ENCODE measurements at regions of chr11 and their contacts with region 1.

Region 1: GRCh38 chr11:57249384-57250319 is 12.6 kb upstream of the APLNR start:
- DNase-seq: peak; percentile 70
- H3K4me3 Mint-ChIP-seq: no peak overlapping the region
- H3K27ac Mint-ChIP-seq: no peak overlapping the region
- H3K4me1 Mint-ChIP-seq: peaks cover 6% of the 10 kb centered on the region
- H3K27me3 Mint-ChIP-seq: peaks cover 34% of the 10 kb centered on the region

Region 2: DNA sequence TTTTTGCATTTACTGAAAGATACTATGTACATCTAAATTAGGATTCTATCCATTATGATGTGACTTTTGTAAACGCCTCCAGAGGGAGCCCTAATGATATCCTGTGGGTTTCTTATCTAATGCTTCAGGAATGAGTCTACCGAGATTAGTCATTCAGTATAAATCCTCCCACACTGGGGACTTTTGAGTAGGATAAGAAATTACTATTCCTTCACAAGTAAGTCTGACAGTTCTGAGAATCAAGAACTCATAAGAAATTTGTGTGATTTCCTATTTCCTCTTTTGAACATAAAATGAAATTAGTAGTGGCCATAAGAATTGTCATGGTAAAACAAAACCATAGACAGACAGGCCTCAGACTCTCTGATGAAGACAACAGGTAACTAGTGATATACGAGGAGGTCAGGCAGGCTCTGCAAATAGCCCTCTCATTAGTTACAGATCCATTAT is 625.0 kb before region 1 on chr11:
- CTCF ChIA-PET with region 1: no interaction called
- intact Hi-C with region 1: loop called (anchors 2 kb)
- DNase-seq: peak; percentile 11
- H3K4me3 Mint-ChIP-seq: no peak overlapping the region
- H3K27ac Mint-ChIP-seq: no peak overlapping the region
- H3K4me1 Mint-ChIP-seq: no peaks in the 10 kb centered on the region
- H3K27me3 Mint-ChIP-seq: no peaks in the 10 kb centered on the region

Region 3: GRCh38 chr11:57001674-57002401 is 247.8 kb before region 1 on chr11:
- CTCF ChIA-PET with region 1: interaction called, 3 read pairs
- intact Hi-C with region 1: loop called (anchors 2 kb)
- DNase-seq: no peak
- H3K4me3 Mint-ChIP-seq: no peak overlapping the region
- H3K27ac Mint-ChIP-seq: no peak overlapping the region
- H3K4me1 Mint-ChIP-seq: no peaks in the 10 kb centered on the region
- H3K27me3 Mint-ChIP-seq: no peaks in the 10 kb centered on the region

Region 4: DNA sequence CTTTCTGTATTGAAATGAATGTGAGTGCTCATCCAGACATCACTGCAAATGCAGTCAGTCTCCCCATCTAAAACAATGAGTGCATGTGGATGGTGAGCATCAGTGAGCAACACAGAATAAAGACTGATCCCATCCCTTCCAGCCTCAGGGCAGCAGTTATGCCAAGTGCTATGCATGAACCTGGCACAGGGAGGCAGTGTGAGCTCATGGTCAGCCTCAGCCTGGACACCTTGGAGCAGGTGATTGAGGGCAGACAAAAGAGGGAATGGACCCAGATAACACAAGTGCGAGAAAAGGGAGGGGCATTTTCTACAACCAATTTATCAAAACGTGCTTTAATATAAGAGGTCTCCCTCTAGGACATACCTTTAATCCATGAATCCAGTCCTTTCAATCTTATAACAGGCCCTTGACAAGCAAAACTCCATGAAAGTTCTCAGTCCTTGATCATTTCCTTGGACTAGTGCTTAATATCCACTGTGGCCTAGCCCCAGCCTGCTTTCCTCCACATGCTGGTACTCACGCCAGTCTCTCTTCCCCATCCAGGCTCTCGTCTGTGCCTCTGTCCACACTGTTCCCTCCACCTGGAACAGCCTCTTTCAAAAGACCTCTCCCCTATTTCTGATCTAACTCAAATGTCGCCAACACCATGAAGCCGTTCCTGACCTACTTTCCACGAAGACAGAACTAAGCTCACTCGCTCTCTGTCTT is 118.4 kb before region 1 on chr11:
- CTCF ChIA-PET with region 1: interaction called, 12 read pairs
- intact Hi-C with region 1: loop called (anchors 1 kb)
- DNase-seq: peak; percentile 7
- H3K4me3 Mint-ChIP-seq: no peak overlapping the region
- H3K27ac Mint-ChIP-seq: no peak overlapping the region
- H3K4me1 Mint-ChIP-seq: no peaks in the 10 kb centered on the region
- H3K27me3 Mint-ChIP-seq: peaks cover 19% of the 10 kb centered on the region